GM12878 (cell line): ENCODE measurements at regions of chr12 and their contacts with region 1.

Region 1: DNA sequence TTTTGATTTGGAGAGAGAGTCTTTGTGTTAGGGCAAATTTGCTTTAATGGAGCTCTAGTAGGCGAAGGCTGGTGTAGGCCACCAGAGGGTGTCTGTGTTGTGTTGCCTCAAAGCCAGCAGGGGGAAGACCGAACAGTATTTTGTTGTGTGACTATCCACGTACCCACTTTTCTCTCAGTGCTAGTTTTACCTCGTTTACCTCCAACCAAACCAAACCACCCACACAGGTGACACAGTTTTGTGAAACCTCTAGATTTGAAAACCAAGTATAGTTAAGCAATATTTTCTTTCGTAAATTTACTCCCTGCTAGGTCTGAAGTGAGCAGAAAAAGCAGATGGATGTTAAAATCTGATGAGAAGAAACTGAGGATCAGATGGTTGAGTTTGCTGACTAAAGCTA is 36.3 kb upstream of the NPFF start:
- DNase-seq: peak; percentile 53
- ATAC-seq: peak; percentile 99
- H3K4me3 ChIP-seq: no peak overlapping the region
- H3K27ac ChIP-seq: peak overlapping the region; percentile 34; the same call in 1 of the 2 replicates
- H3K4me1 ChIP-seq: peaks cover 4% of the 10 kb centered on the region; the same call in 1 of the 2 replicates
- H3K27me3 ChIP-seq: no peaks in the 10 kb centered on the region
- CTCF ChIP-seq: peak; percentile 85 to 99 (median 88); a peak in 5 of 6 replicates
- EP300 ChIP-seq: no peak
- POLR2A ChIP-seq: no peak
- RAD21 ChIP-seq: peak; percentile 90

Region 2: GRCh38 chr12:53352331-53353256 is 190.9 kb before region 1 on chr12:
- CTCF ChIA-PET with region 1: no interaction called
- POLR2A ChIA-PET with region 1: no interaction called
- RAD21 ChIA-PET with region 1: no interaction called
- SMC1A ChIA-PET with region 1: no interaction called
- in situ Hi-C with region 1: no loop called
- intact Hi-C with region 1: no loop called
- DNase-seq: peak; percentile 68
- ATAC-seq: peak; percentile 100
- H3K4me3 ChIP-seq: no peak overlapping the region
- H3K27ac ChIP-seq: no peak overlapping the region
- H3K4me1 ChIP-seq: peaks cover 2% of the 10 kb centered on the region
- H3K27me3 ChIP-seq: no peaks in the 10 kb centered on the region
- CTCF ChIP-seq: peak; percentile 82 to 91 (median 89)
- EP300 ChIP-seq: no peak
- POLR2A ChIP-seq: no peak
- RAD21 ChIP-seq: peak; percentile 100

Region 3: GRCh38 chr12:53561590-53561953 is 18.0 kb after region 1 on chr12:
- CTCF ChIA-PET with region 1: interaction called, 22 read pairs
- POLR2A ChIA-PET with region 1: no interaction called
- RAD21 ChIA-PET with region 1: interaction called, 7 read pairs
- SMC1A ChIA-PET with region 1: interaction called, 14 read pairs
- in situ Hi-C with region 1: no loop called
- intact Hi-C with region 1: no loop called
- DNase-seq: no peak
- ATAC-seq: peak; percentile 43; the same call in 2 of the 3 replicates
- H3K4me3 ChIP-seq: no peak overlapping the region
- H3K27ac ChIP-seq: no peak overlapping the region
- H3K4me1 ChIP-seq: peaks cover 9% of the 10 kb centered on the region
- H3K27me3 ChIP-seq: no peaks in the 10 kb centered on the region
- CTCF ChIP-seq: no peak
- EP300 ChIP-seq: no peak
- POLR2A ChIP-seq: no peak
- RAD21 ChIP-seq: no peak

Region 4: DNA sequence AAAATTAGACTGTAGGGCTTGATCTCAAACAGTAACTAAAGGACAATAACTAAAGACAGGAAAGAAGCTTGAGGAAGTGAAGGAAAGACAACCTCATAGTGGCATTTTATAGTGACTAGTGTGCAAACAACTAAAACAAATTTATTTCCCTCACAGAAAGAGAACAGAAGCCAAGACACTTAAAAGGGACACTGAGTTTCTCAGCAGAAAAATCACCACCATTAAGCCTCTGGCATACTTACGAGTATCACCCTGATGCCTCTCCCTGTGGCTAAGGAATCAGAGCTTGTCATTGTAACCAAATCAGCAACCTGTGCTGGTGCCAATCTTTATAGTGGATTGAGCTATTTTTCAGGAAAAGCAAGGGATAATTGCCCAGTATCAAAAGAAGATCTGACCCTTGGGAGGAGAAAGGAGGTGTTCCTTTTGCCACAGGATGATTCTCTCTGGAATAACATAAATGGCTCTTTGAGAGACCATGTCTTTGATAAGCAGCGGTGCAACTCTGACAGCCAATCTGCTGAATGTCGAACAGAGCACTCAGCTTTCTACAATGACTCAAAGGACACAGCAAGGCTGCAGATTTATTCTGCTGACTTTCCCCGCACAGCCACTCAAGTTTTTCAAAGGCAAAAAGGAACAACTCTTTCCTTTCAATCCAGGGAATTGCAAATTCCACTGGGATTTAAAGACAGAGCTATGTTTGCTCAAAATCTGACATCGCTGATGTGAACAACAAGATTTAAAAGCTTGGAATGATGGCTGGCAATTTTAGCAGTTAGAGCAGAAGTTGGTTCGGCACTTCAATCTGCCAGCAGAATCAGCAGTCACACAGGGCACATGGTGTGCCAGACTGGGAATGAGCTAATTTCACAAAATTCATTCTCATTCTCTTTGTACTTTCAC is 48.0 kb after region 1 on chr12:
- CTCF ChIA-PET with region 1: interaction called, 30 read pairs
- POLR2A ChIA-PET with region 1: no interaction called
- RAD21 ChIA-PET with region 1: no interaction called
- SMC1A ChIA-PET with region 1: interaction called, 12 read pairs
- in situ Hi-C with region 1: no loop called
- intact Hi-C with region 1: no loop called
- DNase-seq: no peak
- ATAC-seq: no peak
- H3K4me3 ChIP-seq: no peak overlapping the region
- H3K27ac ChIP-seq: no peak overlapping the region
- H3K4me1 ChIP-seq: peaks cover 6% of the 10 kb centered on the region
- H3K27me3 ChIP-seq: no peaks in the 10 kb centered on the region
- CTCF ChIP-seq: no peak
- EP300 ChIP-seq: no peak
- POLR2A ChIP-seq: no peak
- RAD21 ChIP-seq: no peak

Region 5: GRCh38 chr12:53631721-53632120 is 88.2 kb after region 1 on chr12:
- CTCF ChIA-PET with region 1: interaction called, 21 read pairs
- POLR2A ChIA-PET with region 1: no interaction called
- RAD21 ChIA-PET with region 1: interaction called, 4 read pairs
- SMC1A ChIA-PET with region 1: interaction called, 10 read pairs
- in situ Hi-C with region 1: no loop called
- intact Hi-C with region 1: no loop called
- DNase-seq: no peak
- ATAC-seq: no peak
- H3K4me3 ChIP-seq: no peak overlapping the region
- H3K27ac ChIP-seq: no peak overlapping the region
- H3K4me1 ChIP-seq: no peaks in the 10 kb centered on the region
- H3K27me3 ChIP-seq: no peaks in the 10 kb centered on the region
- CTCF ChIP-seq: no peak
- EP300 ChIP-seq: no peak
- POLR2A ChIP-seq: no peak
- RAD21 ChIP-seq: no peak

Region 6: DNA sequence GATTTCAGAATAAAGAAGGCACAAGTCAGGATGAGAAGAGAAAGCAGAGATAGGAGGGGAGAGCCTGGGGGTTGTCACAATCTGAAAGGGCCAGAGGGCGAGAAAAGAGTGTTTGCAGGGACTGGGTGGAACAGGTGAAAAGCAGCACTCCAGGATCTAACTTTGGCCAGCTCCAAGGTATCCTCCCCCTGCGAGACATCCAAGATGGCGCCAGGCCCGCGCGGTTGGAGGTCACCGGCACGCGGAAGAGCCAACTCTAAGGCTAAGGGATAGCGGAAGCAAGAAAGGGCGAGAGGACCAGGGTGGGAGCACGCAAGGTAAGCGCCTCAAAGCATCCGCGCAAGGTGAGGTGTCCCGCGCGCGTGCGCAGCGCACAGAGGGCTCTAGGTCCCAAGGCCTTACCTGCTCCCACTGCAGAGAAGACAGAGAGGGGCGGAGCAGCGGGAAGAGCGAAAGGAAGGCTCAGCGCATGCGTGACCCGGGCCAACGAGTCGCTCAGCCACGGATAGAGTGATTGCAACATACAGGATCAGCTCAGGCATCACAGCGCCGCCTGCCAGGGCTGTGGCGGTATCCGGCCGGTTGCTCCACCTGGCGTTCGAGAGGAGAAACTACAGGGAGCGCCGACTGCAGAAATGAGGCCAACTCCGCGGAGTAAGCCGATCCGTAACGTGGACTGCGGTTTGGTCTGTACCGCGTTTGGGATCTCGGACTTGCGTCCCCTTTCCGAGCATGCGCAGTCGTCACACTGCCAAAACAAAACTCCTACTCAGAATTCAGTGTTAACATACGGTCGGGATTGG is 132.3 kb after region 1 on chr12 and contains the start of gene ATP5MC2:
- CTCF ChIA-PET with region 1: interaction called, 189 read pairs
- POLR2A ChIA-PET with region 1: interaction called, 35 read pairs
- RAD21 ChIA-PET with region 1: interaction called, 140 read pairs
- SMC1A ChIA-PET with region 1: interaction called, 112 read pairs
- in situ Hi-C with region 1: loop called (anchors 5 kb)
- intact Hi-C with region 1: loop called (anchors 1 kb)
- DNase-seq: peak; percentile 100
- ATAC-seq: peak; percentile 97
- H3K4me3 ChIP-seq: peak within 1 kb of the TSS; percentile 97
- H3K27ac ChIP-seq: peak within 1 kb of the TSS; percentile 88
- H3K4me1 ChIP-seq: peaks cover 7% of the 10 kb centered on the region
- H3K27me3 ChIP-seq: peaks cover 2 to 3% of the 10 kb centered on the region in 2 experiments; a peak in 1 of 4 replicates
- CTCF ChIP-seq: peak; percentile 100; a peak in 5 of 6 replicates
- EP300 ChIP-seq: no peak
- POLR2A ChIP-seq: peak; percentile 96
- RAD21 ChIP-seq: peak; percentile 89
- polyA plus RNA-seq, gene ATP5MC2: 972 to 1,090 TPM

Region 7: DNA sequence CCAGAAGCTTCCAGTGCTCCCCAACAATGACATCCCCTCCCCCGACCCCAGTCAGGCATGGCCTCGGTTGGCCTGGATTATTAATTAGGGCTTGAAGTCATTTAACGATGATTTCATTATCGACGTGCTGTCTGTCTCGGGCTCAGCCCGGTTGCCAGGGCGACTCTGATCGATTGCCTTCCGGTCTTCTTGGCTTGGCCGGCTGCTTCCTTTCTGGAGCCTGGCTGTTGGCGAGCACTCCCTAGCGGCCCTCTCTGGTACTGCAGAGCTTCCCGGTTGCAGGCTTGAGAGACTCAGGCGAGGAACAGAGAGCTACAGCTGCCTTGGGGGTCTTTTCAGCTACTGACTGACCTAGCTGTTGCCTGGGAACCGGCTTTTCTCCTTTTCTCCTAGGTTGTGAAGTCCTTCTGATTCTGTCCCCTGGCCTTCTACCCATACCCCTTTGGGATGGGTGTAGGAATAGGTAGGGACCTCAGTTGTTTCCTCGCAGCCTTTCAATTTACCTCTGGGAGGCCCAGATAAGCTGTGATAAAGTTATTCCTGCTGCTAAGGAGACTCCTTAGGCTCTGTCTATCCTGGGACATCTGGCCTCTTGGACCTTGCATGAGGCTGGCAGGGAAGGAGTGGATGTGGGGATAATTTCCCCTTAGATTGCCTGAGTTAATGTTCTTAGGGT is 213.7 kb after region 1 on chr12:
- CTCF ChIA-PET with region 1: interaction called, 11 read pairs
- POLR2A ChIA-PET with region 1: no interaction called
- RAD21 ChIA-PET with region 1: interaction called, 7 read pairs
- SMC1A ChIA-PET with region 1: interaction called, 7 read pairs
- in situ Hi-C with region 1: no loop called
- intact Hi-C with region 1: no loop called
- DNase-seq: no peak
- ATAC-seq: peak; percentile 74
- H3K4me3 ChIP-seq: peak overlapping the region; percentile 54
- H3K27ac ChIP-seq: peak overlapping the region; percentile 48
- H3K4me1 ChIP-seq: peaks cover 51% of the 10 kb centered on the region
- H3K27me3 ChIP-seq: peaks cover 0 to 5% of the 10 kb centered on the region in 2 experiments; a peak in 1 of 4 replicates
- CTCF ChIP-seq: peak; percentile 96 to 99 (median 98); a peak in 5 of 6 replicates
- EP300 ChIP-seq: no peak
- POLR2A ChIP-seq: no peak
- RAD21 ChIP-seq: peak; percentile 67